Esophagus squamous epithelium (tissue), 5 donors: ENCODE measurements at regions of chrX and their contacts with region 1.

Region 1: DNA sequence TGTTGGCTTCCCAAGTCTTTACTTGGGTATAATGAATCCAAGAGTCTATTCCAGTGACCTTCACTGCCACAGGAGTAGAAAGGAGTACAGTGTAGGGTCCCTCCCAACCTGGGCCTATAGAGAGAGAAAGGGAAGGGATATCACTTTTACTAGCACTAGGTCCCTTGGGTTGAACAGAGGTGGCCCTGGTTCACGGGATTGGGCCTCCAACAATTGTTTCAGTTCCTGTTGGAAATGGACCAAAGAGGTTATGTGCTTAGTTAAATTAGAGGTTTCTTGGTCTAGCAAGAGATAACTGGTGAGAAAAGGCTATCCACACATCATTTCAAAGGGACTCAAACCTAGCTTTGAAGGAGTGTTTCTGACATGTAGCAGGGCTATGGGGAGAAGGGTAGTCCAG is 57.1 kb upstream of the MED14 start:
- DNase-seq: no peak
- H3K4me3 ChIP-seq: no peak overlapping the region
- H3K27ac ChIP-seq: no peak overlapping the region
- H3K4me1 ChIP-seq: peaks cover 0 to 13% (median 3%) of the 10 kb centered on the region in 3 donors
- H3K27me3 ChIP-seq: no peaks in the 10 kb centered on the region
- CTCF ChIP-seq: no peak
- POLR2A ChIP-seq: no peak

Region 2: GRCh38 chrX:40651620-40652223 is 140.7 kb before region 1 on chrX:
- intact Hi-C with region 1: loop called (anchors 10 kb)
- DNase-seq: no peak
- H3K4me3 ChIP-seq: no peak overlapping the region
- H3K27ac ChIP-seq: peak overlapping the region in 1 of 4 donors; percentile 12
- H3K4me1 ChIP-seq: peaks cover 0 to 5% (median 4%) of the 10 kb centered on the region in 3 donors
- H3K27me3 ChIP-seq: no peaks in the 10 kb centered on the region
- CTCF ChIP-seq: peak; percentile 66 to 86 (median 81)
- POLR2A ChIP-seq: no peak